Right cardiac atrium (tissue), 5 donors: ENCODE measurements at regions of chr1 and their contacts with region 1.

Region 1: GRCh38 chr1:235075188-235075926 is 53.3 kb downstream of the TOMM20 start:
- DNase-seq: peak; percentile 79 to 89 (median 89)
- ATAC-seq: peak; percentile 77 to 86
- H3K4me3 ChIP-seq: no peak overlapping the region
- H3K27ac ChIP-seq: peak overlapping the region; percentile 100
- H3K4me1 ChIP-seq: peaks cover 32% of the 10 kb centered on the region
- H3K27me3 ChIP-seq: no peaks in the 10 kb centered on the region

Region 2: DNA sequence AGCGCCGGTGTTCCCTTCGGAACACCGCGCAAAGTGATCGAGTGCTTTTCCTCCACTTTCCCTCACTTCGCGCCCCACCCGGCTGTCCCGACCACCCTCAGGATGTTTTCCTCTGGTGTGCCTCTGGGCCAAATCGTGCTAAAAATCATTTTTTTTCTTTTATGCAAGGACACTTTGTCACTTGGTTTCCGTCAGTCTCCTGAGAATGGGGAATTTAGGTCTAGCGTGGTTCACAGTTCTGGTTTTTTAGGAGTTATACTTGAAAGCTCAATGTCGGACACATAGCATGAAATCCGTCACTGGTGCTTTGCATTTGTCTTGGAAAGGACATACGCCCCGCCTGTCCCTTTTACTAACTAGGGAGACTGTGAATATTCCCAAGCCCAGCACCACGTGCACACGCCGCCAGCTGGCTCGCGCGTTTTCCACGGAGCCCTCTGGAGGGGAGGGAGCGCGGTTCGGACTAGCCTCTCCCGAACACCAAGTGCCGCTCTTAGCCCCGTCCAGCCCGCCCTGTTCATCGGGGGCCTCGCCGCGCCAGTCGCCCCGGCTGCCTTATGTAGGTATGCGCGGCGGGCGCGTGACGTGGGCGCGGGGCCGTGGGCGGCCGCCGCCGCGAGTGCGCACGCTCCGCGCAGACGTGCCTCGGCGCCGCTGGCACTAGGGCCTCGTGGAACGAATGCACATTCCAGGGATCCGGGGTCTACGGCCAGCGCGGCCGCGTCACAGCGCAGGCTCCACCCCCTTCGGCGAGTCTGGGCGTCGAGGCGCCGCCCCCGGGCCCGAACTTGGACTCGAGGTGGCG is 464.8 kb before region 1 on chr1:
- intact Hi-C with region 1: loop called in 2 of 4 experiments (anchors 5 kb)
- DNase-seq: peak; percentile 98 to 99 (median 99)
- ATAC-seq: peak; percentile 81 to 85
- H3K4me3 ChIP-seq: peak overlapping the region; percentile 71
- H3K27ac ChIP-seq: peak overlapping the region; percentile 99
- H3K4me1 ChIP-seq: peaks cover 4% of the 10 kb centered on the region
- H3K27me3 ChIP-seq: no peaks in the 10 kb centered on the region

Region 3: DNA sequence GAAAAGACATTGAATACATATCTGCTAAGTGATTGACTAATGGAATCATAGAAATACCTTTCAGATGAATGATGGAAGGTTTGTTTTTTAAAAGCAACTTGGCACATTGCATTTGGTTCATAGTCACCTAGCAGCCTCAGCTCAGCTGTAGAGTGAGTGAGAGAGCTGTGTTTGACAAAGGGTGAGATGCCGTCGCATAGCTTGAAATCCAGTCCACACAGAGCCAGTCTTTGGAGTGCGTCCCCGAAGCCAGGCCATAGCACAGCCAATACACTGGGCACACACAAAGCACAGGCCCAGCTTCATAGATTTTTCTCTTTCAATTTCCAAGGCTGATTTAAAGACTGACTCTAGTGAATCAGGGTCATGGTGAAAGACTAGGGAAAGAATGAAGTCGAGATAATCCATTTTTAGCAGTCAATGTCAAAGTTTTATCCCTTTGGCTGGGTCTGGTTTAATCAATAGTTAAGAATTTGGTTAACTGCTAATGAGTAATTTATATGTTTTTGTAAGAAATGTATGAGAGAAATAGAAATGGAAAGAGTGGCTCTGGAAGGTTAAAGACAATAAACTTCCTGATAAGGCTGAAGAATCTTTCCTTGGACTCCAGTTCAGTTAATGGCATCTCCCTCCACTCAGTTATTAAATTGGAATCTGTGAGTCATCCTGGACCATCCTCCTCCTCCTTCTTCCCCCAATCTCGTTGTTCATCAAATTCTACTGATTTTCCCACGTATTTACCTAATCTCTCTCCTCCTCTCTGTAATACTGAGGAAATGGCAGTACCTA is 364.2 kb before region 1 on chr1:
- intact Hi-C with region 1: no loop called
- DNase-seq: no peak
- ATAC-seq: peak in 1 of 2 donors; percentile 31
- H3K4me3 ChIP-seq: no peak overlapping the region
- H3K27ac ChIP-seq: peak overlapping the region; percentile 50
- H3K4me1 ChIP-seq: no peaks in the 10 kb centered on the region
- H3K27me3 ChIP-seq: no peaks in the 10 kb centered on the region

Region 4: DNA sequence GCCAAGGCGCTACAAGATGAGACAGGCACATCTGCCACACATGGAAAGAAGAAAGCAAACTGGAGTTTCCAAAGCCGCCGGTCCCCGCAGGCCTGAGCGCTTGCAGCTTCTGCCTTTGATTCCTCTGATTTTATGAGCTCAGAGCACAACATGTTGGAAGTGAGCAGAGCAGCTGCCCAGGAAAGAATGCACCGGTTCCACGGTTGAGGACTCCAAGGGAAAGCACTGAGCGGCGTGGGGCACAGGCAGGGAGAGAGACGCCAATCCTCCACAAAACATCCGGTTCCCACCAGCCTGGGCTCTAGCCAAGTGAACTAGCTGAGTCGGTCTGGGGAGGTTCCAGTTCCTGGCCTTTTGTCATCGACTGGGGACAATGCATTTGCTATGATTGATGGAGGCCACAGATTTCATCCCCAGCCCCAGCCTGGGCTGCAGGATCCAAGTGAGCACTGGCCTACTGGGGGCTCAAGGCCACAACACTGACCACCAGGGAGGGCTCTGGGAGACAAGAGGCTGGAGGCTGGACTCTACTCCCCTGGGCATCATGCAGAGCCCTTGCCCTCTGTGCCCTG is 212.3 kb before region 1 on chr1:
- intact Hi-C with region 1: loop called in 1 of 4 experiments (anchors 10 kb)
- DNase-seq: peak; percentile 87 to 94 (median 92)
- ATAC-seq: peak; percentile 77 to 78
- H3K4me3 ChIP-seq: no peak overlapping the region
- H3K27ac ChIP-seq: peak overlapping the region; percentile 81
- H3K4me1 ChIP-seq: peaks cover 19% of the 10 kb centered on the region
- H3K27me3 ChIP-seq: no peaks in the 10 kb centered on the region

Region 5: DNA sequence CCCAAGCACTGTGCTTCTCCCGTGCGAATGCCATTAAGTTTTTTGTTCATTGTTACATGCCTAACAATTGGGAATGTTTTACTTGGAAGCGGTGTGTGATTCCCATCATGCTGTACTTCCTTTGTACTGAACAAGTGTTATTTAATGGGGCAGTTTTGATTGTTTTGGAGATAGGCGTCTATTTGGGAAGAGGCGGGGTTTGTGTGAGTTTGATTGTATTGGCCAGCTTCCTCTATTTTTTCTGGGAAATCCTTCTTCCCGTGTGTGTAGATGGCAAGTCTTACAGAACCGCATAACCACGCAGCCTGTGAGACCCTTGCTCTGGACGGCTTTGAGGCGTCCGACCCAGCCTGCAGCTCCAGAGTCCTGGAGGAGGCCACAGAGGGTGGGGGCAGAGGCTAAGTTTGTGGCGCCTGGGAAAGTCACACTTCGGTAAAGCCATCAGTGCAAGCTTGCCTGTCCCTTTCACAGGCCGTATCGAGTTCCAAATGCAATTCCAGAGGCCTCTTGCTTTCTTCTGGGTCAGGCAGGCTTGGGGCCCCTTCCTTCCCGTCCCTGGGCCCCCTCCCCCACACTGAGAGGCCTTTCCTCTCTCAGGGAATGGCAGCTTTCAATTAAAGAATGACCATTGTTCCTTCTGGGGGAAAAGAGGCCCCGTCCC is 157.0 kb before region 1 on chr1:
- intact Hi-C with region 1: loop called in 1 of 4 experiments (anchors 10 kb)
- DNase-seq: peak; percentile 62 to 80 (median 78)
- ATAC-seq: peak; percentile 63 to 84
- H3K4me3 ChIP-seq: no peak overlapping the region
- H3K27ac ChIP-seq: peak overlapping the region; percentile 84
- H3K4me1 ChIP-seq: peaks cover 27% of the 10 kb centered on the region
- H3K27me3 ChIP-seq: no peaks in the 10 kb centered on the region

Region 6: GRCh38 chr1:234987415-234988154 is 87.8 kb before region 1 on chr1:
- intact Hi-C with region 1: loop called (anchors 5 to 10 kb)
- DNase-seq: peak; percentile 85 to 93 (median 86)
- ATAC-seq: peak; percentile 91
- H3K4me3 ChIP-seq: no peak overlapping the region
- H3K27ac ChIP-seq: peak overlapping the region; percentile 100
- H3K4me1 ChIP-seq: peaks cover 12% of the 10 kb centered on the region
- H3K27me3 ChIP-seq: no peaks in the 10 kb centered on the region